Activated naive CD4-positive, alpha-beta T cell treated with anti-CD3 and anti-CD28 coated beads for 36 hours (primary cell): ENCODE measurements at regions of chr6 and their contacts with region 1.

Region 1: DNA sequence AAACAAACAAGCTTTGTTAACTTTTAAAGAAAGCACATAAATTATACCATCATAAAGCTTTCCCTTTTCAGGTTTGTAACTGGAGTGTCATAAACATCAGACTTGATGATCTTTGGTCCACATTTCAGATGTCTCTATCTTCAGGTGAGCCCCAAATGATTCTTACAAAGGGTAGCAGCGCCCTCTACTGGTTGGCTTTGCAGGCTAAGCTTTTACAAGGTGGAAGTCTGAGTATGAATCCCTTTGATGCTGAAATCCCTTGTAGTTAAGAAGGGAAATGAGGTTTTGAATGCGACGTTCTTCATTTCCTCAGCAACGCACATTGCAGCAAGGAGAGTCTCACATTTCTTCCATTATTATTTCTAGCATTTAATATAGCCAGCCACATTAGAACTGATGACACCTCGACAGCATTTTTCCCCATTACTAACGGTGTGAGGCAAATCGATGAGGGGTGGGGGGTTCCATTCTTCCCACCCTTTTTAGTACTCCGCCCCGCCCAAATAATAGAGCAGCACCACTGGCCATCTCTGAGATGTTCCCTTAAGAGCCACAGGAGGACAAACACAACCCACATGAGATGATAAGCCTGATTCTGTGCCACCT is 126.3 kb upstream of the NT5E start:
- DNase-seq: peak; percentile 88
- H3K4me3 Mint-ChIP-seq: no peak overlapping the region
- H3K27ac Mint-ChIP-seq: no peak overlapping the region
- H3K4me1 Mint-ChIP-seq: no peaks in the 10 kb centered on the region
- H3K27me3 Mint-ChIP-seq: peaks cover 6% of the 10 kb centered on the region

Region 2: GRCh38 chr6:84227434-84228197 is 1095.9 kb before region 1 on chr6 and contains the start of gene CEP162:
- CTCF ChIA-PET with region 1: no interaction called
- intact Hi-C with region 1: loop called (anchors 1 kb)
- DNase-seq: peak; percentile 91
- H3K4me3 Mint-ChIP-seq: peak within 1 kb of the TSS; percentile 99
- H3K27ac Mint-ChIP-seq: peak within 1 kb of the TSS; percentile 93
- H3K4me1 Mint-ChIP-seq: peaks cover 11% of the 10 kb centered on the region
- H3K27me3 Mint-ChIP-seq: peaks cover 5% of the 10 kb centered on the region
- total RNA-seq, gene CEP162: 4.4 to 5.0 TPM

Region 3: GRCh38 chr6:84428300-84428907 is 895.1 kb before region 1 on chr6:
- CTCF ChIA-PET with region 1: no interaction called
- intact Hi-C with region 1: loop called (anchors 1 kb)
- DNase-seq: peak; percentile 46
- H3K4me3 Mint-ChIP-seq: no peak overlapping the region
- H3K27ac Mint-ChIP-seq: no peak overlapping the region
- H3K4me1 Mint-ChIP-seq: no peaks in the 10 kb centered on the region
- H3K27me3 Mint-ChIP-seq: peaks cover 3% of the 10 kb centered on the region

Region 4: GRCh38 chr6:84774157-84774984 is 549.2 kb before region 1 on chr6:
- CTCF ChIA-PET with region 1: no interaction called
- intact Hi-C with region 1: loop called (anchors 10 kb)
- DNase-seq: peak; percentile 30
- H3K4me3 Mint-ChIP-seq: no peak overlapping the region
- H3K27ac Mint-ChIP-seq: no peak overlapping the region
- H3K4me1 Mint-ChIP-seq: peaks cover 8% of the 10 kb centered on the region
- H3K27me3 Mint-ChIP-seq: peaks cover 61% of the 10 kb centered on the region